Transverse colon (tissue), 4 donors: ENCODE measurements at regions of chr12 and their contacts with region 1.

Region 1: DNA sequence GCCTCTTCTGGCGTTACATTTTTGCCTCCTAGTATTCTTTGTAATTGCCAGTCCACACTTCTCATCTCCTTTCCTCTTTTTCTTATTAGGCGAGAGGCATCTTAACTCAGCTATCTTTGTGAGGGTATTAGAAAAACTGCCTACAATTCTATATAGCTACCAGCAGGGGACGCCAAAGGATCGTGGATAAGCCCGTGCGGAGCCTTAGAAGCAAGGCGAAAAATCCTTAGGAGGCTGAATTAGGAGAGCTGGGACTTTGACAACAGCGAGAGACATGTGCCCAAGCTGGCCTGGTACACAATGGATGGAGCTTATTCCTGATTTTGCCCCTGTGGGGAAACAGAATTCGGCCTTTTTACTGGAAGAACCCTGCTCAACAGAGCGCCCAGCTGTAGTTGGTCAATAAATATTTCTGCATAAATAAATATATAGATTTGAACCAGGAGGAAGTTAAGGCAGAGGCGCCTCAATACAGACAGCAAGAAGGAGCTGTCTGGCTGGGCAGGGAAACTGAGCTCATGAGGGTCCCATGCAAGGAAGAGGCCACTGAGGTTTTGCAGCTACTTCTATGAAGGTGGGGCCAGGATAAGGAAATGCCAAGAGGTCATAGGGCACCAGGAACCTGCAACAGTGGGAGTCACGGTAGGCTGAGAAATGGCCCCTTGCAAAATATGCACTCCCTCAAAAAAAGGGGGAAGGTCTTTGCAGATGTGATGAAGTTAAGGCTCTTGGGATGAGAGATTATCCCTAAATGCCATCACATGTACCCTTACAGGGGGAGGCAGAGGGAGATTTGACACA is 14.6 kb upstream of the RBM19 start:
- DNase-seq: peak; percentile 24
- H3K4me3 ChIP-seq: no peak overlapping the region
- H3K27ac ChIP-seq: no peak overlapping the region
- H3K4me1 ChIP-seq: no peaks in the 10 kb centered on the region
- H3K27me3 ChIP-seq: peaks cover 24% of the 10 kb centered on the region
- CTCF ChIP-seq: peak; percentile 91 to 96 (median 93)
- EP300 ChIP-seq: no peak
- POLR2A ChIP-seq: no peak

Region 2: GRCh38 chr12:114508529-114509129 is 527.9 kb after region 1 on chr12:
- in situ Hi-C with region 1: loop called (anchors 5 to 25 kb)
- intact Hi-C with region 1: loop called (anchors 5 kb)
- DNase-seq: peak; percentile 65
- H3K4me3 ChIP-seq: no peak overlapping the region
- H3K27ac ChIP-seq: no peak overlapping the region
- H3K4me1 ChIP-seq: no peaks in the 10 kb centered on the region
- H3K27me3 ChIP-seq: peaks cover 27% of the 10 kb centered on the region
- CTCF ChIP-seq: peak; percentile 59 to 73 (median 64)
- EP300 ChIP-seq: no peak
- POLR2A ChIP-seq: no peak

Region 3: GRCh38 chr12:114515127-114515526 is 534.4 kb after region 1 on chr12:
- in situ Hi-C with region 1: loop called in 3 of 4 experiments (anchors 5 to 25 kb)
- intact Hi-C with region 1: loop called (anchors 5 kb)
- DNase-seq: no peak
- H3K4me3 ChIP-seq: no peak overlapping the region
- H3K27ac ChIP-seq: no peak overlapping the region
- H3K4me1 ChIP-seq: no peaks in the 10 kb centered on the region
- H3K27me3 ChIP-seq: peaks cover 4% of the 10 kb centered on the region
- CTCF ChIP-seq: no peak
- EP300 ChIP-seq: no peak
- POLR2A ChIP-seq: no peak